ENCODE measurements at regions of chr17 and their contacts with region 1.

Region 1: DNA sequence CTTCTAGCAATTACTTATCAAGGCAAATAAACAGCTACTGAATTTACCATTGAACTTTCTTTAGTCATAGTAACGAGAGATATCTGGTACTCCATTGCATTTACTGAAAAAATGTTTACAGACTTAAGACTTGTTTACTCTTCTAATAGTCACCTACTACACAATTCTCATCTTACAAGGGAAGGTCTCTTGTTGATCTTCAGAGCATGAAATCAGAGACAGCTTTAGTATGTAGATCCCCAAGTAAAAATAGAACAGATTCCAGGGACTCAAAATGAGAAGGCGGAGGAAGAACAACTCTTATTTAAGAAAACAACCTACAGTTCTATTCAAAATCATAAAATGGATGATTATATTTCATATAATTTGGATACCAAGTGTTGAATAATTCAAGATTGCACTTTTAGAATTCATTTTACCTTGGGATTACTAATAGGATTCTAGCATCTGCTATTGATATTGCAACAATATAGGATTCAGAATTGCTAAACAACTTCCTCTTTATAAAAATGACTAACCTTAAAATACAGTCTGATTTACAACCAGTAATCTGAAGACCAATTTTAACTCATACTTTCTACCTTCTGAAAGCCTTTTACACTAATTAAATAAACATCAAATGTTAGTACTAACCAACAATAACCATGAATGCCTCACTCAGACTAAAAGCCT is 20.8 kb downstream of the UBE2G1 start:
- DNase-seq: no peak
- H3K4me3 ChIP-seq: no peak overlapping the region
- H3K27ac ChIP-seq: peak overlapping the region; percentile 20
- H3K4me1 ChIP-seq: peaks cover 21% of the 10 kb centered on the region
- H3K27me3 ChIP-seq: no peaks in the 10 kb centered on the region
- CTCF ChIP-seq: no peak

Region 2: DNA sequence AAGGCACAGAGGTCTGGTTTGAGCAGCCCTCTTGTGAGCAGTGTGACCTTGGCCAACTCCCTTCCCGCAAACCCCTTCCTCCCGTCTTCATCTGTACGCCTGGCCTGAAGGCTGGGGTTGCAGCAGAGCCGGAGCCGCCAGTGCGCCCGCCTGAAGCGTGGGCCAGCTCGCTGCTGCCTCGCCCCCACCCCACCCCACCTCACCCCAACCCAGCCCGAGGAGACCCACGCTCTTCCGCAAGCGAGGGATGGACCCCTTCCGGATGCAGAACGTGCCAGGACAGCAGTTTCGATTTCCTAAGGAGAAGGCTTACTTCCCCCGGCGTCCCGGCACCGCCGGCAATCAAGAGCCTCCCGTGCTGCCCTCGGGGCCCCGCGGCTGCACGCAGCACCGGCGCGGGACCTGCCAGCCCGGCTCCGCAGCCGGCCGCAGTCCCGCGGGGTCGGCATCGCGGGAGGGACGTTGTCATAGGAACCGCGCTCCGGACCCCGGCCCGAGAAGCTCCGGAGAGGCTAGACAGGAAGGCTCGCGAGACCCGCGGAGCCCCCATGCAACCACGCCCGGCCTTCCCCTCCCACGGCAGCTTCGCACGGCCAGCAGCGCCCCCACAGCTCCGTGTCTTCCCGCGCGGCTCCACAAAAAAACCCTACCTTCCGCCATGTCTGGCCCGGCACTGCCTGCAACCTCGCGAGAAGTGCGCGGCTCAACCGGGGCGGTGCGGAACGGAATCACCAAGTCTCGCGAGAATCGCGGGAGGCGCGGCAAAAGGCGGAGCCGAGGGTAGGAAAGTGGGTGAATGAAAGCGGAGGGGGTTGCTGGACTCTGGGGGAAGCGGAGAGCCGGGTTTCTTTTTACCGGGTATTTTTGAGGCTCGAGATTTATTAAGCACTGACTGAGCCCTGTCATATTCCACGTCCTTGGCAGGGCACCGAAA is 82.2 kb before region 1 on chr17 and contains the start of gene ANKFY1:
- CTCF ChIA-PET with region 1: no interaction called
- POLR2A ChIA-PET with region 1: interaction called, 18 read pairs
- intact Hi-C with region 1: no loop called
- DNase-seq: peak; percentile 97
- H3K4me3 ChIP-seq: peak within 1 kb of the TSS; percentile 90
- H3K27ac ChIP-seq: peak within 1 kb of the TSS; percentile 86
- H3K4me1 ChIP-seq: peaks cover 14% of the 10 kb centered on the region
- H3K27me3 ChIP-seq: no peaks in the 10 kb centered on the region
- CTCF ChIP-seq: 0 out of 2 replicates have a peak, but pooled peaks have one; percentile 26
- total RNA-seq, gene ANKFY1: 63.2 and 70.5 TPM in 2 replicates

Region 3: GRCh38 chr17:4366327-4367063 is 20.8 kb after region 1 on chr17 and contains the start of gene UBE2G1:
- CTCF ChIA-PET with region 1: no interaction called
- POLR2A ChIA-PET with region 1: no interaction called
- intact Hi-C with region 1: no loop called
- DNase-seq: peak; percentile 98
- H3K4me3 ChIP-seq: peak within 1 kb of the TSS; percentile 100
- H3K27ac ChIP-seq: peak within 1 kb of the TSS; percentile 98
- H3K4me1 ChIP-seq: peaks cover 6% of the 10 kb centered on the region
- H3K27me3 ChIP-seq: no peaks in the 10 kb centered on the region
- CTCF ChIP-seq: peak; percentile 43
- total RNA-seq, gene UBE2G1: 107 and 114 TPM in 2 replicates